ENCODE measurements at regions of chr11 and their contacts with region 1.

Region 1: DNA sequence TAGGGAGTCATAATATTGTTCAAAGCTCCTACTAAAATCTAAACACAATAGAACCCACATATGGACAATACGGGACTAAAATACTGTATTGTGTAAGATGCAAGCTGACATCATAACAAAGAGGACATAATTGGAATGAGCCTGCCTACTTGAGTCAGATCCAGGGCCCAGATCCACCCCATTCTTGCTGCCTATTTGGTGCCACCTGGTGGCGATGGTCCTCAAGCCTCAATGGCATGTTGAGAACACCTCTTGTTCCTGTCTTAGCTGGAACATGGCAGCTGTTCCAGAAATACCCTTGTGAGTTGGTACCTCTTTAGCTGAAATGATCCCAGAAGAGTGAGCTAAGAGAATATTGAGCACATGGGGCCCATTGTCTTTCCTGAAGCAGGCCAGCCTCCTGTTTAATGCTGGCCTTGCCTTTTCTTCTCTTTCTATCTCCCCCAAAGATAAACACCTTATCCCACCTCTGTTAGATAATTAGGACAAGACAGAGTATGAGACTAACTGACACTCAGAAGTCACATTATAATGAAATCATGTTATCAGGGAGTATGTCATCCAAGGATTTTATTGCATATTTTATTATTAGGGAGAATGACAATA is 680.9 kb upstream of the ANO5 start:
- DNase-seq: peak; percentile 46 to 72
- H3K4me3 ChIP-seq: no peak overlapping the region
- H3K27ac ChIP-seq: no peak overlapping the region
- H3K4me1 ChIP-seq: no peaks in the 10 kb centered on the region
- H3K27me3 ChIP-seq: no peaks in the 10 kb centered on the region
- CTCF ChIP-seq: peak in 3 of 6 experiments; percentile 21 to 52 (median 32)
- POLR2A ChIP-seq: no peak

Region 2: DNA sequence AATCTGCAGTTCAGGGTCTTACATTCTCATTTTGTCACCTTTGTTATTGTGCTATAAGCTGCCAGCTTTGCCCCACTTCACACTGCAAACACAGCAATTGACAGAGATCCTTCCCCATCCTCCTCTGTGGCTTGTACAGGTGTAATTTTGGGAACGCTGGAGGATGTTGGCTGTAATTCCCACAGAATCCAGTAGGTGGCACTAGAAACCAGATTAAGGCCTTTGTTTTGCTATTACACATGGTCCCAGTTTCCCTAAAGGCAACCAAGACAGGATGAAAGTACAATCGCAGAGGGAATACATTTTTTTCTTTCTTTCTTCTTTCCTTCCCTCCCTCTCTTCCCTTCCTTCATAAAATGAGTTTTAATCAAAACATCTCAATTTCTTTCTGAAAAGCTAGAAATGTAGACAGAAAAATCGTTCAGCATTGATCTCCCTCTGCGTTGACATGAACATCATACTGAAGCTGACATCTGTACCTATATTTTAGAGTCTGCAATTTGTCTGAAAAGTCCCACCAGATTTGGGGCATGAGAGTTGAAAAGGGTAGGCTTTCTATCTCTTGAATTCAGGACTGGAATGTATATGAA is 863.9 kb before region 1 on chr11:
- intact Hi-C with region 1: loop called (anchors 10 kb)
- DNase-seq: peak; percentile 14 to 16
- H3K4me3 ChIP-seq: no peak overlapping the region
- H3K27ac ChIP-seq: no peak overlapping the region
- H3K4me1 ChIP-seq: no peaks in the 10 kb centered on the region
- H3K27me3 ChIP-seq: no peaks in the 10 kb centered on the region
- CTCF ChIP-seq: peak; percentile 62 to 87 (median 78)
- POLR2A ChIP-seq: no peak

Measured in thyroid gland (tissue), 4 donors.